Activated CD4-positive, alpha-beta T cell treated with anti-CD3 and anti-CD28 coated beads, Interleukin-2, amount 10 ng/mL, durations not matched to agents 24 days and 14 days (primary cell): ENCODE measurements at regions of chr11 and their contacts with region 1.

Region 1: GRCh38 chr11:128182844-128183243 is 404.5 kb downstream of the ETS1 start:
- DNase-seq: no peak
- H3K4me3 Mint-ChIP-seq: no peak overlapping the region
- H3K27ac Mint-ChIP-seq: peak overlapping the region; percentile 73
- H3K4me1 Mint-ChIP-seq: peaks cover 30% of the 10 kb centered on the region
- H3K27me3 Mint-ChIP-seq: no peaks in the 10 kb centered on the region

Region 2: GRCh38 chr11:128156486-128156885 is 26.4 kb before region 1 on chr11:
- intact Hi-C with region 1: no loop called
- DNase-seq: no peak
- H3K4me3 Mint-ChIP-seq: no peak overlapping the region
- H3K27ac Mint-ChIP-seq: no peak overlapping the region
- H3K4me1 Mint-ChIP-seq: peaks cover 10% of the 10 kb centered on the region
- H3K27me3 Mint-ChIP-seq: peaks cover 3% of the 10 kb centered on the region

Region 3: GRCh38 chr11:128232588-128232987 is 49.7 kb after region 1 on chr11:
- intact Hi-C with region 1: loop called (anchors 2 kb)
- DNase-seq: peak; percentile 68
- H3K4me3 Mint-ChIP-seq: peak overlapping the region; percentile 55
- H3K27ac Mint-ChIP-seq: peak overlapping the region; percentile 90
- H3K4me1 Mint-ChIP-seq: peaks cover 41% of the 10 kb centered on the region
- H3K27me3 Mint-ChIP-seq: no peaks in the 10 kb centered on the region

Region 4: GRCh38 chr11:128453444-128454336 is 270.8 kb after region 1 on chr11:
- intact Hi-C with region 1: no loop called
- DNase-seq: peak; percentile 62
- H3K4me3 Mint-ChIP-seq: no peak overlapping the region
- H3K27ac Mint-ChIP-seq: peak overlapping the region; percentile 59
- H3K4me1 Mint-ChIP-seq: peaks cover 42% of the 10 kb centered on the region
- H3K27me3 Mint-ChIP-seq: no peaks in the 10 kb centered on the region